ENCODE measurements at regions of chr6 and their contacts with region 1.

Region 1: DNA sequence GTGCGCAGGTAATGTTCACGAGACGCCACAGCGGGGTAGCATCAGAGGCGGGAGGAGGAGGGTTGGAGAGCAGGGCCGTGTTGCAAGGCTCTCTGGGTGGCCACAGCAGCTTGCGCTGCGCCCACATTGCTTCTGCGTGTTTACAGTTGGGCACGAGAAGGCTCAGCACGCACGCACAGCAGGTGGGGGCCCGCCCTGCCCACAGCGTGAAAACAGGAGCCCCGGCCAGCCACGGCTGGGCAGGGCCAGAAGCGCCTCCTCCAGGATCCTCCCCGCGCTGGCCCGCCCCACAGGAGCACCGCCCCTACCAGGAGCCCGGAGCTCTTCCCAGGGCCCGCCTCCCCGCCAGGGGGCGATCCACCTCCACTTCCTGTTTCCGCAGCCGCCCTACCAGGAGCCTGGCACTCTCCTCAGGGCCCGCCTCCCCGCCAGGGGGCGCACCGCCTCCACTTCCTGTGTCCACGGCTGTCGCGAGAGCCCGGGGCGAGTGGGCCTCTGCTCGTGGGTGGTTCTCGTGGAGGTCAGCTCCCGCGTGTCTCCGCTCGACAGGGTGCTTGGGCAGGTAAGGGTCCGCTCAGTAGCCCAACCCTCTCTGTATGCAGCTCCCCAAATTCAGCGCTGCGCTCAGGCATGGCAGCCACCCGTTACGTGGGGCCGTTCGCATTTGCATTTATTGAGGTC is at the start of gene FAM50B:
- DNase-seq: peak; percentile 85
- H3K27ac ChIP-seq: peak within 1 kb of the TSS; percentile 70
- CTCF ChIP-seq: peak; percentile 89

Region 2: GRCh38 chr6:3258720-3259490 is 590.2 kb before region 1 on chr6 and contains the start of gene PSMG4:
- CTCF ChIA-PET with region 1: no interaction called
- POLR2A ChIA-PET with region 1: no interaction called
- DNase-seq: peak; percentile 96
- H3K27ac ChIP-seq: peak within 1 kb of the TSS; percentile 78
- CTCF ChIP-seq: no peak

Region 3: DNA sequence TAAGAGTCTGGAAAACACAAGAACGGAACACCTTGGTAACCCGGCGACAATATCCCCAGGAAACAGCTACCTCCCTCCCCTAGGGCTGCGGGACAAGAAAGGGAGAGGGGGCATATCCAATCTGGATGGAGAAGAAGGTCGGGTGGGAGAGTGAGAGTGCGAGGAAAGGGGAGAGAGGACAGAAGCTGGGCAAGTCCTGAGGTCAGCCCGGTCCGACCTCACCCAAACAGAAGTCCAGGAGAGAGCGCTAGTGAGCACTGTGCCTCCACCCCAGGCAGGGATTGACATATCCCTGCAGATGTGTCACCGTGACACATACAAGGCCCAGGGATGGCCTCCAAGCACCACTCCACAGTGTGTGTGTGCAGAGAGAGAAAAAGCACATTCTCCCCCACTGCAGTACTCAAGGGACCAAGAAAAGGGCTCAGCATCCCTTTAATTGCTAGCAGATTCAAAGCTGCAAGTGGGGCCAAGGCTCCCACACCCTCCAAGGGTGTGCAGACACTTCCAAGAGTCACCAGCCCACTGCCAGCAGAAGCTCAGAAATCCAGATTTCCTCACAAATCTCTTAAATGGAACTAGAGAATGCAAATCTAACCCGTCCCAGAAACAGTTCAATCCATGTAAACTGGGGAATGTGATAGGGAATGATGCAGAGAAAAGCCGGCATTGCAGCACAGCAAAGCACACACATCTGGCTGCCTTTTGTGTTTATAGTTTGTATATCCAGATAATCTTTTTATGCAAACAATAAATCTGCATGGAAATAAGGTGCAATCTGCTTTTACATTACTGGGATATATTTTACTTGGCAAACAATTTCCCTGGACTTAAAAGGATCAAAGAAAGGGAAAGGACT is 100.6 kb before region 1 on chr6:
- CTCF ChIA-PET with region 1: interaction called, 18 read pairs
- POLR2A ChIA-PET with region 1: no interaction called
- DNase-seq: peak; percentile 67
- H3K27ac ChIP-seq: peak overlapping the region; percentile 99
- CTCF ChIP-seq: peak; percentile 50

Region 4: GRCh38 chr6:3808759-3809514 is 40.1 kb before region 1 on chr6:
- CTCF ChIA-PET with region 1: interaction called, 11 read pairs
- POLR2A ChIA-PET with region 1: no interaction called
- DNase-seq: peak; percentile 89
- H3K27ac ChIP-seq: peak overlapping the region; percentile 98
- CTCF ChIP-seq: no peak

Region 5: GRCh38 chr6:3919130-3919628 is 70.1 kb after region 1 on chr6:
- CTCF ChIA-PET with region 1: no interaction called
- POLR2A ChIA-PET with region 1: no interaction called
- DNase-seq: peak; percentile 47
- H3K27ac ChIP-seq: peak overlapping the region; percentile 83
- CTCF ChIP-seq: no peak

Region 6: GRCh38 chr6:3990692-3991501 is 141.8 kb after region 1 on chr6:
- CTCF ChIA-PET with region 1: interaction called, 28 read pairs
- POLR2A ChIA-PET with region 1: no interaction called
- DNase-seq: peak; percentile 82
- H3K27ac ChIP-seq: peak overlapping the region; percentile 61
- CTCF ChIP-seq: peak; percentile 89

Measured in RWPE1 (cell line).